ENCODE measurements at regions of chr5 and their contacts with region 1.

Region 1: DNA sequence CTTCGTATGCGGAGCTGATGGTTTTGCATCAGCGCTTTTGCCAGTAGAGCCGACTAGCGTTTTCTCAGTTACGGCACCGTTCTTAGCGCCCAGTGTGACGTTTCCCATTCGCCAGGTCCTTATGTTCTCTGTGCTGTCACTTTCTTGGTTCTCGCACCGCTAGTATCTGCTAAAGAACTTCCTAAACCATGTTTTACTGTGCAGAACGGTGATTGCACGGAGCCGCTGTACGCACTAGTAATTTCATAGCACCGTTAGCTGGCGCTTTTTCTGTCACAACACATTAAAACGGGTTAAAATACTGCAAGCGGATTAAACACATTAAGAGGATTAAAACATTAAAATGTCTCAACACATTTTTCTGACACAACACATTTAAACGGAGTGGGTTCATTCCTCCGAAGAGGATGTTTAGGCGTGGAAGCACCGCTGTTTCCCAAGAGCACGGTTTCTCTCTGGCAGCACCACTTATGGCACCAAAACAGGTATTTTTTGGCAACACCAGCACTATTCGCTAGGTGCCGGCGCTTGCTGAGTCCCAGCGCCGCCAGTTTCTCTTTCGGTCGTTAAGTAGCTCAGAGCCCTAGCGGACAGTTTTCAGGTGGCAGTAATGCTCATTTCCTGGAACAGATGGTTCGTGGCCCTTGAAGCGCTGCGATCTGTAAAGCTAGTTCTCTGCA is 20.4 kb downstream of the ANXA2R start:
- DNase-seq: peak; percentile 96 to 98 (median 97)
- H3K4me3 ChIP-seq: peak overlapping the region; percentile 41 to 98 (median 86)
- H3K27ac ChIP-seq: peak overlapping the region; percentile 96 to 98
- H3K4me1 ChIP-seq: peaks cover 9 to 55% (median 29%) of the 10 kb centered on the region in 4 experiments
- H3K27me3 ChIP-seq: no peaks in the 10 kb centered on the region

Region 2: GRCh38 chr5:42950440-42951292 is 69.1 kb before region 1 on chr5:
- CTCF ChIA-PET with region 1: interaction called, 5 read pairs
- POLR2A ChIA-PET with region 1: interaction called, 10 read pairs
- DNase-seq: peak; percentile 97 to 98 (median 98)
- H3K4me3 ChIP-seq: peak overlapping the region; percentile 56 to 84 (median 74)
- H3K27ac ChIP-seq: peak overlapping the region; percentile 89 to 97
- H3K4me1 ChIP-seq: peaks cover 8 to 42% (median 36%) of the 10 kb centered on the region in 4 experiments
- H3K27me3 ChIP-seq: peaks cover 0 to 5% (median 0%) of the 10 kb centered on the region in 5 experiments

Region 3: GRCh38 chr5:42994246-42995151 is 25.3 kb before region 1 on chr5:
- CTCF ChIA-PET with region 1: interaction called, 15 read pairs
- POLR2A ChIA-PET with region 1: interaction called, 4 read pairs
- DNase-seq: peak; percentile 90 to 96 (median 95)
- H3K4me3 ChIP-seq: peak overlapping the region; percentile 67 to 98 (median 91)
- H3K27ac ChIP-seq: peak overlapping the region; percentile 97 to 98
- H3K4me1 ChIP-seq: peaks cover 12 to 46% (median 35%) of the 10 kb centered on the region in 4 experiments
- H3K27me3 ChIP-seq: no peaks in the 10 kb centered on the region

Region 4: GRCh38 chr5:43008369-43009153 is 11.2 kb before region 1 on chr5:
- CTCF ChIA-PET with region 1: interaction called, 63 read pairs
- POLR2A ChIA-PET with region 1: interaction called, 32 read pairs
- DNase-seq: peak; percentile 98 to 99 (median 99)
- H3K4me3 ChIP-seq: peak overlapping the region; percentile 32 to 95 (median 82)
- H3K27ac ChIP-seq: peak overlapping the region; percentile 89 to 91
- H3K4me1 ChIP-seq: peaks cover 12 to 44% (median 31%) of the 10 kb centered on the region in 4 experiments
- H3K27me3 ChIP-seq: no peaks in the 10 kb centered on the region

Region 5: DNA sequence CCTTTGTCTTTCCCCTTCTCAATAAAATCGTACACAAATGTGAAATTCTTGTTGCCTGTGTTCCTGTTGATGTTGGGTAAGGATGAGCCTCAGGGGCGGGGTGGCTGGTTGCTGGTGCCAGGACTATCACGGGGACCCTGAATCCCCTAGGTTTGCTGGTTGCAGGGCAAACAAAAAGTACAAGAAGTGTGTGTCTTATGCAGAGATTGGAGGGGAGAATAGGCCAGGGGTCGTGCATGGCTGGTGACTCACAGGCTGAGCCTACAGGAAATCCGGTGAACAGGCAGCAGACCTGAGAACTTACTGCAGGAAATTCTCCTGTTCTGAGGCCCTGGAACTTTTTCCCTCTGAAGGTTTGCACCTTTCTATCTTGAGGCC is 14.8 kb after region 1 on chr5:
- CTCF ChIA-PET with region 1: interaction called, 82 read pairs
- POLR2A ChIA-PET with region 1: interaction called, 12 read pairs
- DNase-seq: peak in 2 of 3 donors; percentile 52 to 68
- H3K4me3 ChIP-seq: no peak overlapping the region
- H3K27ac ChIP-seq: no peak overlapping the region
- H3K4me1 ChIP-seq: peaks cover 4 to 44% (median 31%) of the 10 kb centered on the region in 4 experiments
- H3K27me3 ChIP-seq: no peaks in the 10 kb centered on the region

Region 6: DNA sequence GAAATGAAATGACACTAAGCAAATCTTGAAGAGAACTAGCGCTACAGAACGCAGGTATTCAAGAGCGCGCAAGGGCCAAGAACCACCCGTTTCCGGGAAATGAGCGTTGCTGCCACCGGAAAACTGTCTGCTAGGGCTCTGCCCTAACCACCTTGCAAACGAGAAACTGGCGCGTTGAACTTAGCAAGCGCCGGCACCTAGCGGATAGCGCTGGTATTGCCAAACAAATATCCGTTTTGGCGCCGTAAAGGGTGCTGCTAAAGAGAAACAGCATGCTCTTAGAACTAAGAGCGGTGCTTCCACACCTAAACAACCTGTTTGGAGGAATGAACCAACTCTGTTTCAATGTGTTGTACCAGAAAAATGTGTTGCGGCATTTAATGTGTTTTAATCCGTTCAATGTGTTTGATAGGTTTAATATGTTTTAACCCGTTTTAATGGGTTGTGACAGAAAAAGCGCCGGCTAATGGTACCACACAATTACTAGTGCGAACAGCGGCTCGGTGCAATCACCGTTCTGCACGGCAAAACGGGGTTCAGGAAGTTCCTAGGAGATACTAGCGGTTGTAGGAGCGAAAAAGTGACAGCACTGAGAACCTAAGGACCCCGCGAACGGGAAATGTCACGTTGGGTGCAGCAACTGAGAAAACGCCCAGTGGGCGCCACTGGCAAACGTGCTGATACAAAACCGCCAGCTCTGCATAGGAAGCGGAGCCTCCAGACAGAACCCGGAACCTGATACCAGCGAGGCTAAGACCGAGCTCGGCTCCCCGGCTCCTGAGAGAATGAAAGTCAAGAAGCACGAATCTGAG is 20.7 kb after region 1 on chr5 and contains the start of gene ANXA2R:
- CTCF ChIA-PET with region 1: interaction called, 82 read pairs
- POLR2A ChIA-PET with region 1: interaction called, 35 read pairs
- DNase-seq: peak; percentile 96 to 98 (median 98)
- H3K4me3 ChIP-seq: peak within 1 kb of the TSS; percentile 46 to 95 (median 80)
- H3K27ac ChIP-seq: peak within 1 kb of the TSS; percentile 99 to 100
- H3K4me1 ChIP-seq: peaks cover 9 to 72% (median 44%) of the 10 kb centered on the region in 4 experiments
- H3K27me3 ChIP-seq: no peaks in the 10 kb centered on the region

Region 7: GRCh38 chr5:43066799-43067741 is 47.3 kb after region 1 on chr5:
- CTCF ChIA-PET with region 1: interaction called, 10 read pairs
- POLR2A ChIA-PET with region 1: no interaction called
- DNase-seq: peak; percentile 94 to 97 (median 95)
- H3K4me3 ChIP-seq: peak overlapping the region; percentile 85 to 99 (median 94)
- H3K27ac ChIP-seq: peak overlapping the region; percentile 98 to 99
- H3K4me1 ChIP-seq: peaks cover 12 to 41% (median 32%) of the 10 kb centered on the region in 4 experiments
- H3K27me3 ChIP-seq: no peaks in the 10 kb centered on the region